Heart right ventricle (tissue), 16 donors: ENCODE measurements at regions of chr20 and their contacts with region 1.

Region 1: GRCh38 chr20:38173237-38174156 is 8.4 kb upstream of the TGM2 start:
- DNase-seq: peak in 1 of 2 donors; percentile 39
- ATAC-seq: peak in 5 of 8 donors; percentile 38 to 73 (median 43)
- H3K4me3 ChIP-seq: no peak overlapping the region
- H3K27ac ChIP-seq: no peak overlapping the region
- H3K4me1 ChIP-seq: peaks cover 2 to 40% (median 14%) of the 10 kb centered on the region in 9 donors
- H3K27me3 ChIP-seq: no peaks in the 10 kb centered on the region
- CTCF ChIP-seq: no peak

Region 2: DNA sequence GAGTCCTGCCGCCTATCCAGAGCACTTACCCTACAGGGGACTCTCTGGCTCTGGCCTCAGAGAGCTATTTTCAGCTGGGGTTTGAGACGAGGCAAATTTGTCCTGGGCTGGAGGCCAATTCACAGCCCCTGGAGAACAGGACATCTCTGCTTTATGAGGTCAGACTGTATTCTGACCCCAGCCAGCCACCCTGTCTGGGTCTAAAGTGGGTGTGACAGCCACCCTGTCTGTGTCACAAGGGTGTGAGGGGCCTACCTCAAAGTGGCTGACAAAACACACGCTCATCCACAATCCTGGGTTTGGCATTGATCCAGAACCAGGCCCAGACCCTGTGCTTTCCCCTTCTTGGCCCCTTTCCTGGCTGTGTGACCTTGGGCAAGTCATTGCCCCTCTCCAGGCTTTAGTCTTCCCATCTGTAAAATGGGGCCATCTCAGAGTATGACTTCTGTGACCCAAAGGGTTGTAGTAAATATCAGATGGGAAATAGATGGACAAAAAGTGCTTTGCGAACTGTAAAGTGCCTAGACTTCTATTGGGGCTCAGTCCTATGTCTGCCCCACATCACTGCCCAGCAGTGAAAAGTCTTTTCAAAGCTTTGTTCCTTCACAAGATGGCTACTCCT is 35.7 kb after region 1 on chr20:
- intact Hi-C with region 1: loop called in 1 of 10 experiments (anchors 5 kb)
- DNase-seq: peak; percentile 66 to 69
- ATAC-seq: peak; percentile 34 to 90 (median 75)
- H3K4me3 ChIP-seq: no peak overlapping the region
- H3K27ac ChIP-seq: peak overlapping the region in 6 of 10 donors; percentile 1 to 68 (median 64)
- H3K4me1 ChIP-seq: peaks cover 4 to 37% (median 12%) of the 10 kb centered on the region in 9 donors
- H3K27me3 ChIP-seq: no peaks in the 10 kb centered on the region
- CTCF ChIP-seq: no peak